Heart right ventricle (tissue), 16 donors: ENCODE measurements at regions of chr3 and their contacts with region 1.

Region 1: GRCh38 chr3:30611613-30612436 is 5.4 kb downstream of the TGFBR2 start:
- DNase-seq: no peak
- ATAC-seq: no peak
- H3K4me3 ChIP-seq: peak overlapping the region in 2 of 10 donors; percentile 1 to 89
- H3K27ac ChIP-seq: peak overlapping the region in 6 of 10 donors; percentile 32 to 100 (median 99)
- H3K4me1 ChIP-seq: peaks cover 12 to 90% (median 84%) of the 10 kb centered on the region in 9 donors
- H3K27me3 ChIP-seq: no peaks in the 10 kb centered on the region
- CTCF ChIP-seq: no peak

Region 2: DNA sequence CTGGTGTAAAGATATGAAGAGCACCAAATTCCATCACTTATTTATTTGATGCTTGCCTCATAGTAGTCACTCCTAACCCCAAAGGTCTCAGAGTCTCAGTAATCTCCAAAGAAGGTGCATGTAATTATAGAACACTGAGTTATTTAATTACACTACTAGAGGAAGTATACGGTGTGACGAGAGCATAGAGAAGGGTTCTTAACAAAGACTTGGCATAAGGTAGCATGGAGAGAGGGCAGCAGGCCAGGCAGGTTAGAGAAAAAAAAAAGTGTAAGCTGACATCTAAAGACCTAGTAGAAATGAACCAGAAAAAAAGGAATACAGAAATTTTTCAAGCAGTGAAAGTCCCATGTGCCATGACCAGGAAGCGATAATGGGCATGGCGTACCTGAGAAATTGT is 218.7 kb before region 1 on chr3:
- intact Hi-C with region 1: no loop called
- DNase-seq: no peak
- ATAC-seq: no peak
- H3K4me3 ChIP-seq: no peak overlapping the region
- H3K27ac ChIP-seq: no peak overlapping the region
- H3K4me1 ChIP-seq: peaks cover 0 to 10% (median 0%) of the 10 kb centered on the region in 9 donors
- H3K27me3 ChIP-seq: no peaks in the 10 kb centered on the region
- CTCF ChIP-seq: no peak

Region 3: GRCh38 chr3:30644593-30645012 is 32.8 kb after region 1 on chr3:
- intact Hi-C with region 1: loop called in 1 of 10 experiments (anchors 5 kb)
- DNase-seq: peak in 1 of 2 donors; percentile 68
- ATAC-seq: peak in 6 of 8 donors; percentile 6 to 48 (median 20)
- H3K4me3 ChIP-seq: no peak overlapping the region
- H3K27ac ChIP-seq: peak overlapping the region in 9 of 10 donors; percentile 13 to 84 (median 72)
- H3K4me1 ChIP-seq: peaks cover 13 to 98% (median 71%) of the 10 kb centered on the region in 9 donors
- H3K27me3 ChIP-seq: no peaks in the 10 kb centered on the region
- CTCF ChIP-seq: no peak